IMR-90 (cell line): ENCODE measurements at regions of chr9 and their contacts with region 1.

Region 1: DNA sequence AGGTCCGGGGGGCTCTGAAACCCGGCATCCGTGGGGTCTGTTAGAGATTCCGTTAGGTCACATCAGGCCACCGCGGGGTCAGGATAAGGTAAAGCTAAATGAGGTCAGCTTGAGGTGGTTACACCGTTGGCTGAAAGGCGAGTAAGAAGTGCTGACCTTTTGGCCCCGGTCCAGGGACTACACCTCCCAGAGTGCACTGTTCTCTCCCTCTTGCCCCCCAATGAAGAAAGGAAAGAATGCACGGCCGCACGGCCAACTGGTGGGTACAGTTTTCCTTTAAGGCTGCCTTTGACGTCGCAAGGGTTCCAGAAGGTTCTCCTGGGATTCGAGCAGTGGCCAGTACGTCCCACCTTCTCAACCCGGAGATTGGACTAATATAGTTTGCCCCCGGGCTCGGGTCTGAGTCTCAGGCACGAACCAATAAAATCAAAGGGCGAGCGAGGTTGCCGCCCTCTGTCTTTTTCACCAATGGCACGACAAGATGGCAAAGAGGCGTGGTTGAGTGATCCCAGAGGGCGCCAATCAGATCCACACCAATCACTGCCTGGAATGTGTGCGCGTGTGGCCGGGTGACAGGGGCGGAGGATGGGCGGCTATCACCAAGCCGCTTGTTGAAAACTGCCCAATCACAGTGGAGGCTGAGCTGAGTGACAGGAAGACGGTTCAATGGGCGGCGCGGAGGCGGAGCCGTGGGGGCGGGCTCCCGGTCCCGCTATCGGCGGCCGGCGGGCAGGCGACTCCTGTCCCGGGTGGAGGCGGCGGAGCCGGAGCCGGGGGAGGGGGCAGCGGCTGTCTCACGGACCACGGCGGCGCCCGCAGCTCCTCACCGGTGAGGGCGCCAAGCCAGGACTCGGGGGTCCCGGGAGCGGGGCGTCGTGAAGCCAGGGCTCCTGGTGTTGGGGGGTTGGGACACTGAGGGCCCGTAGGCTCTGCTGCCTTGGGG is at the start of gene DNAJB5:
- DNase-seq: peak; percentile 100
- ATAC-seq: peak; percentile 87
- H3K4me3 ChIP-seq: peak within 1 kb of the TSS; percentile 60
- H3K27ac ChIP-seq: peak within 1 kb of the TSS; percentile 58
- H3K4me1 ChIP-seq: peaks cover 33% of the 10 kb centered on the region
- H3K27me3 ChIP-seq: no peaks in the 10 kb centered on the region
- CTCF ChIP-seq: no peak
- POLR2A ChIP-seq: peak; percentile 91; the same call in 1 of the 2 replicates
- RAD21 ChIP-seq: no peak
- total RNA-seq, gene DNAJB5: 11.7 and 14.9 TPM in 2 replicates

Region 2: GRCh38 chr9:34907044-34907443 is 82.2 kb before region 1 on chr9:
- CTCF ChIA-PET with region 1: interaction called, 5 read pairs
- POLR2A ChIA-PET with region 1: no interaction called
- dilution Hi-C with region 1: no loop called
- in situ Hi-C with region 1: loop called (anchors 5 kb)
- intact Hi-C with region 1: no loop called
- DNase-seq: no peak
- ATAC-seq: no peak
- H3K4me3 ChIP-seq: no peak overlapping the region
- H3K27ac ChIP-seq: no peak overlapping the region
- H3K4me1 ChIP-seq: no peaks in the 10 kb centered on the region
- H3K27me3 ChIP-seq: peaks cover 14% of the 10 kb centered on the region
- CTCF ChIP-seq: no peak
- POLR2A ChIP-seq: no peak
- RAD21 ChIP-seq: no peak

Region 3: GRCh38 chr9:35812025-35812602 is 822.8 kb after region 1 on chr9 and contains the start of gene SPAG8:
- CTCF ChIA-PET with region 1: no interaction called
- POLR2A ChIA-PET with region 1: no interaction called
- dilution Hi-C with region 1: no loop called
- in situ Hi-C with region 1: no loop called
- intact Hi-C with region 1: no loop called
- DNase-seq: peak; percentile 96
- ATAC-seq: peak; percentile 70
- H3K4me3 ChIP-seq: peak within 1 kb of the TSS; percentile 60
- H3K27ac ChIP-seq: peak within 1 kb of the TSS; percentile 24
- H3K4me1 ChIP-seq: no peaks in the 10 kb centered on the region; the same call in 1 of the 2 replicates
- H3K27me3 ChIP-seq: no peaks in the 10 kb centered on the region
- CTCF ChIP-seq: no peak
- POLR2A ChIP-seq: no peak
- RAD21 ChIP-seq: no peak
- total RNA-seq, gene SPAG8: 0.28 and 0.72 TPM in 2 replicates